ENCODE measurements at regions of chr1 and their contacts with region 1.

Region 1: GRCh38 chr1:203486618-203487370 is 7.2 kb upstream of the OPTC start:
- DNase-seq: no peak
- H3K4me3 Mint-ChIP-seq: peak overlapping the region; percentile 67
- H3K27ac Mint-ChIP-seq: no peak overlapping the region
- H3K4me1 Mint-ChIP-seq: peaks cover 9% of the 10 kb centered on the region
- H3K27me3 Mint-ChIP-seq: no peaks in the 10 kb centered on the region

Region 2: DNA sequence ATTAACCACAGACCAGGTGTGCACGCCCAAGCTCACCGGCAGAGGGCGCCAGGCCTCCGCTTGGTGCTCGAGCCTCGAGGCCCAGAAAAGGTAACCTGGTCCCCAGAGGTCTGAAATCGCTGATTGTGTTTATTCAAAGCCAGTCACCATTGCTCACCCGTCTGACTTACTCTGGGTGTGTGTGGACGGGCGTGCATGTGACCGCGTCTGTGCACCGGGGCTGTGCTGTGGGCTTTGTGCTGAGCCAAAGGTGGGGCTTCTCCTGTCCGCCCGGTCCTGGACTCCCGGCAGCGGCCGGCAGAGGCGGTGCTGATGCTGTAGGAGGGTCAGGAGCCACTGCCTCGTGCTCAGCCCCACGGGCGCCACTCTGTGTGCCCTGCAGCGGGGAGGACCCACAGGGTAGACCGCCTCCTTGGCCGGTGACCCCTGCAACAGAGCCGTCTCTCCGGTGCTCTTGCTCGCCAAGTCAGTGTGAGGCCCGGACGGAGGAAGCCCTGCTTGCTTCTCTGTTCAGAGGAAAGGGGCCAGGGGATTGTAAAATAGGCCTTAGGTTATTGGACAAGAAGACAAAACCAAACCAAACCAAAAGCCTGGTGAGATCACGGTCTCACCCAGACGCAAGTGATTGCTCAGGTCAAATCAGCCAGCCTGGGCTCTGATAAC is 213.5 kb before region 1 on chr1:
- CTCF ChIA-PET with region 1: interaction called, 212 read pairs
- POLR2A ChIA-PET with region 1: interaction called, 3 read pairs
- intact Hi-C with region 1: no loop called
- DNase-seq: peak; percentile 95
- H3K4me3 Mint-ChIP-seq: peak overlapping the region; percentile 63
- H3K27ac Mint-ChIP-seq: peak overlapping the region; percentile 72
- H3K4me1 Mint-ChIP-seq: peaks cover 64% of the 10 kb centered on the region
- H3K27me3 Mint-ChIP-seq: no peaks in the 10 kb centered on the region

Region 3: GRCh38 chr1:203475012-203475981 is 11.5 kb before region 1 on chr1 and contains the start of gene PRELP:
- CTCF ChIA-PET with region 1: interaction called, 22 read pairs
- POLR2A ChIA-PET with region 1: no interaction called
- intact Hi-C with region 1: no loop called
- DNase-seq: no peak
- H3K4me3 Mint-ChIP-seq: no peak within 1 kb of the TSS
- H3K27ac Mint-ChIP-seq: no peak within 1 kb of the TSS
- H3K4me1 Mint-ChIP-seq: no peaks in the 10 kb centered on the region
- H3K27me3 Mint-ChIP-seq: peaks cover 23% of the 10 kb centered on the region
- total RNA-seq, gene PRELP: not detected

Measured in activated CD4-positive, alpha-beta memory T cell treated with anti-CD3 and anti-CD28 coated beads for 36 hours (primary cell).